ENCODE measurements at regions of chr3 and their contacts with region 1.

Region 1: GRCh38 chr3:107522510-107523288 is at the start of gene BBX:
- DNase-seq: peak; percentile 85 to 97 (median 92)
- ATAC-seq: peak; percentile 89
- H3K4me3 ChIP-seq: peak within 1 kb of the TSS; percentile 67
- H3K4me3 Mint-ChIP-seq: peak within 1 kb of the TSS; percentile 99
- H3K27ac ChIP-seq: peak within 1 kb of the TSS; percentile 77 to 85
- H3K27ac Mint-ChIP-seq: peak within 1 kb of the TSS; percentile 95
- H3K4me1 ChIP-seq: peaks cover 19% of the 10 kb centered on the region
- H3K4me1 Mint-ChIP-seq: peaks cover 26% of the 10 kb centered on the region
- H3K27me3 ChIP-seq: no peaks in the 10 kb centered on the region
- H3K27me3 Mint-ChIP-seq: no peaks in the 10 kb centered on the region
- CTCF ChIP-seq: no peak
- total RNA-seq, gene BBX: 79.7 to 81.8 TPM

Region 2: DNA sequence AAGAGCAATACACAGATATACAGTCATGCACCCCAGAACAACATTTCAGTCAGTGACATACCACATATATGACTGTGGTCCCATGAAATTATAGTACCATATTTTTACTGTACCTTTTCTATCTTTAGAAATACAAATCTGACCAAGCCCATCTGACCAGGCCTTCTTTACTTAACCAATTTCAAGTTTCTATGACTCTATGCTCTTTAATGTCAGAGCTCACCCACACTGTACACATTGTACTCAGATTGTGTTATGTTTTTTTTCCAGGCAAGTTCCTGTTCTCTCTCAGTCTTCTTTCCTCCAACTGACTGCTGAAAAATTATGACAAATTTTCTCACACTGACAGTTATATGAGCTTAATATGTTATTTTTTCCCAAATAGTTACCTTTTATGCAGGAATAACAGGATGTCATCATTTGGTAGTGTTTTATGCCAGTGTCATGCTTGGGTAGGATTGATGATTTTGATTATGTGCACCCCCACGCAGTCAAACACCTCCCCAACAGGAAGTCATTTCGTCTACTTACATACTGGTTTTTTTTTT is 1645.8 kb before region 1 on chr3:
- CTCF ChIA-PET with region 1: no interaction called
- POLR2A ChIA-PET with region 1: no interaction called
- intact Hi-C with region 1: loop called in 1 of 2 experiments (anchors 10 kb)
- DNase-seq: peak in 4 of 14 experiments; percentile 22 to 52 (median 44)
- ATAC-seq: peak; percentile 82
- H3K4me3 ChIP-seq: peak overlapping the region; percentile 3
- H3K4me3 Mint-ChIP-seq: peak overlapping the region; percentile 56
- H3K27ac ChIP-seq: peak overlapping the region in 1 of 2 donors; percentile 6
- H3K27ac Mint-ChIP-seq: peak overlapping the region; percentile 71
- H3K4me1 ChIP-seq: no peaks in the 10 kb centered on the region
- H3K4me1 Mint-ChIP-seq: peaks cover 35% of the 10 kb centered on the region
- H3K27me3 ChIP-seq: no peaks in the 10 kb centered on the region
- H3K27me3 Mint-ChIP-seq: no peaks in the 10 kb centered on the region
- CTCF ChIP-seq: no peak

Region 3: GRCh38 chr3:107429320-107430181 is 93.1 kb before region 1 on chr3:
- CTCF ChIA-PET with region 1: interaction called, 3 read pairs
- POLR2A ChIA-PET with region 1: interaction called, 11 read pairs
- intact Hi-C with region 1: loop called (anchors 2 kb)
- DNase-seq: peak; percentile 18 to 81 (median 44)
- ATAC-seq: peak; percentile 66
- H3K4me3 ChIP-seq: peak overlapping the region; percentile 68
- H3K4me3 Mint-ChIP-seq: peak overlapping the region; percentile 93
- H3K27ac ChIP-seq: no peak overlapping the region
- H3K27ac Mint-ChIP-seq: peak overlapping the region; percentile 50
- H3K4me1 ChIP-seq: peaks cover 24% of the 10 kb centered on the region
- H3K4me1 Mint-ChIP-seq: peaks cover 18% of the 10 kb centered on the region
- H3K27me3 ChIP-seq: no peaks in the 10 kb centered on the region
- H3K27me3 Mint-ChIP-seq: no peaks in the 10 kb centered on the region
- CTCF ChIP-seq: peak; percentile 90

Region 4: DNA sequence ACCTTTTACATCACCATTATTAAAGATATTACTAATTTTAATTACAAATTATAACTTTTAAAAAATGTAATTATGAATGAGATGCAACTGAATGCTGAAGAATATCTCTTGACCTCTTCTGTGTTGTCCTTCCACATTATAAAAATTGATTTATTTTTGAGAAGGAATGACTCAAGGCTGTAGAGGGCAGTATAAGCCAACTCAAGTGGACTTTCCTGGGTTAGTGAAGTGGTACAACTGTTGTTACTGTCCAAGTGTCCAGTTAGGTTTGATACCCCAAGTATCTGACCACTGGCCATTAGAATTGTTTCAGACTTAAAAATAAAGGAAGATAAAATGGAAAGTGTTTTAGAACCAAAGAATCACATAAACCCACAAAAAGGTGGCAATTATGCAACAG is 52.0 kb after region 1 on chr3:
- CTCF ChIA-PET with region 1: no interaction called
- POLR2A ChIA-PET with region 1: no interaction called
- intact Hi-C with region 1: no loop called
- DNase-seq: peak in 3 of 14 experiments; percentile 33 to 45 (median 41)
- ATAC-seq: peak; percentile 46
- H3K4me3 ChIP-seq: no peak overlapping the region
- H3K4me3 Mint-ChIP-seq: no peak overlapping the region
- H3K27ac ChIP-seq: no peak overlapping the region
- H3K27ac Mint-ChIP-seq: no peak overlapping the region
- H3K4me1 ChIP-seq: peaks cover 3% of the 10 kb centered on the region
- H3K4me1 Mint-ChIP-seq: peaks cover 46% of the 10 kb centered on the region
- H3K27me3 ChIP-seq: no peaks in the 10 kb centered on the region
- H3K27me3 Mint-ChIP-seq: no peaks in the 10 kb centered on the region
- CTCF ChIP-seq: peak; percentile 60

Region 5: DNA sequence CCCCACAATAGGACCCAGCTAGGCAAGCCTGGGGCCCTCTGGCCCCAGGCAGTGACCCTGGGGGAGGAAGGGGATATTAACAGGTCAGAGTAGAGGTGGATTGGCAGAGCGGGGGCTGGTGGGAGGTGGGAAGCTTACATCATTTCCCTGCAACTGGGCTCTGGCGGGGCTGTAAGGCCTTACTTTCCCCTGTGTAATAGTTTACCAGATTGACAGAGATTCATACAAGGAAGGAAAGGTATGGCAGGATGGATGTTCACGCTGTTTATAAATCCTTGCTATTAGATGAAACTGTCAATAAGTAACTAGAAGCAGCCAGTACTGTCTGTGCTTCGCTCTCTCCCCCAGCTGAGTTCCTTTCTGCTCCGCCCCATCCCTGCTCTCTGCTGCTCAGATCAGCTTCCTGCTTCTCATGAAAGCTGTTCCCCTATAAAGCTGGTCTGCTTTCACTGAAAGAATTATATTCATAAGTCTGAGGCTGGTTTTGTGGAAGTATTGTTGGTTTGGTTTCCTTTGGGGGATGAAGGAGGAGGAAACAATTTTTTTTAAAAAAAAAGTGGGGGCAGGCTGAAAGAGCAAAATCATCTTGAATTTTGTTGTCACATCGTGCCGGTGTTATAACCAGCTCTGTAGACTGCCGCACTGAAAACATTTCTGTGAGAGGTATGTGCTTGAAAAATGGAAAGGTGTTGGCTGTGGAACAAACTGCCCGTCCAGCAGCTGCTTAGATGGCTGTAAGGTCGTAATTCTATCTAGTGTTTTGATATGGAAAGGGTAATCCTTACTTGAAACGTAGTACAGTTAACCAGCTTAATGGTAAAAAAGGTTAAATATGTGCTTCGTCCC is 76.5 kb after region 1 on chr3:
- CTCF ChIA-PET with region 1: no interaction called
- POLR2A ChIA-PET with region 1: interaction called, 11 read pairs
- intact Hi-C with region 1: loop called in 1 of 2 experiments (anchors 5 kb)
- DNase-seq: peak in 13 of 14 experiments; percentile 21 to 69 (median 31)
- ATAC-seq: peak; percentile 90
- H3K4me3 ChIP-seq: peak overlapping the region; percentile 49
- H3K4me3 Mint-ChIP-seq: peak overlapping the region; percentile 86
- H3K27ac ChIP-seq: peak overlapping the region; percentile 52 to 82
- H3K27ac Mint-ChIP-seq: peak overlapping the region; percentile 84
- H3K4me1 ChIP-seq: peaks cover 11% of the 10 kb centered on the region
- H3K4me1 Mint-ChIP-seq: peaks cover 76% of the 10 kb centered on the region
- H3K27me3 ChIP-seq: no peaks in the 10 kb centered on the region
- H3K27me3 Mint-ChIP-seq: no peaks in the 10 kb centered on the region
- CTCF ChIP-seq: no peak

Region 6: DNA sequence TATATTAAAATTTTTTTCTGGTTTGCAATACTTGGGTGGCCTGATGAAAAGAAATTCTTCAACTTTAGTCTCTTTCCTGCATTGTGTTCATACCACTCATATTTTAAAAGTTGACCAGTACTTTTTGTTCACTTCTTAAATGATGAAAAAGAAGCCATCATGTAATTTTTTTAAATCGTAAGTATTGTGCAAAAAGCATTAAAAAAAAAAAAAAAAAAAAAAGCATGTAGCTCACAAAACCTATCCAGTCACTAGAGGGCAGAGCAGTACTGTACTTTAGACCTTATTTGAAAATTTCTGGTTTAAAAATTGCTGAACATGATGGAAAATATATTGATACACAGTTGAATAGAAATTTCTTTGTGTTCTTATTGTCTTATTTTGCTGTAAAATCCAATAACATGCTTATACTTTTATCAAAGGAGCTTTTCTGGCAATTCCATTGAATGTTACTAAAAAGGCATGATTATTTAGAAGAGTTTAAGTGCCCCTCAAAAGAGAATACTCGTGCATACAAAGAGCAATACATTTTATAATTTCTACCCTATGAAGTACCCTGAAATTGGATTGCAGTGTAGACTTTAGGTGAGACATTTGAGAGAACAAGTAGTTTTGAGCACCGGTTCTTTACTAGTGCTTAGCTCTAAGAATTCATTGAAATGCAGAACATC is 137.7 kb after region 1 on chr3:
- CTCF ChIA-PET with region 1: no interaction called
- POLR2A ChIA-PET with region 1: no interaction called
- intact Hi-C with region 1: no loop called
- DNase-seq: peak in 3 of 14 experiments; percentile 48 to 70 (median 60)
- ATAC-seq: no peak
- H3K4me3 ChIP-seq: no peak overlapping the region
- H3K4me3 Mint-ChIP-seq: no peak overlapping the region
- H3K27ac ChIP-seq: no peak overlapping the region
- H3K27ac Mint-ChIP-seq: no peak overlapping the region
- H3K4me1 ChIP-seq: peaks cover 7% of the 10 kb centered on the region
- H3K4me1 Mint-ChIP-seq: peaks cover 45% of the 10 kb centered on the region
- H3K27me3 ChIP-seq: no peaks in the 10 kb centered on the region
- H3K27me3 Mint-ChIP-seq: no peaks in the 10 kb centered on the region
- CTCF ChIP-seq: peak; percentile 86

Region 7: DNA sequence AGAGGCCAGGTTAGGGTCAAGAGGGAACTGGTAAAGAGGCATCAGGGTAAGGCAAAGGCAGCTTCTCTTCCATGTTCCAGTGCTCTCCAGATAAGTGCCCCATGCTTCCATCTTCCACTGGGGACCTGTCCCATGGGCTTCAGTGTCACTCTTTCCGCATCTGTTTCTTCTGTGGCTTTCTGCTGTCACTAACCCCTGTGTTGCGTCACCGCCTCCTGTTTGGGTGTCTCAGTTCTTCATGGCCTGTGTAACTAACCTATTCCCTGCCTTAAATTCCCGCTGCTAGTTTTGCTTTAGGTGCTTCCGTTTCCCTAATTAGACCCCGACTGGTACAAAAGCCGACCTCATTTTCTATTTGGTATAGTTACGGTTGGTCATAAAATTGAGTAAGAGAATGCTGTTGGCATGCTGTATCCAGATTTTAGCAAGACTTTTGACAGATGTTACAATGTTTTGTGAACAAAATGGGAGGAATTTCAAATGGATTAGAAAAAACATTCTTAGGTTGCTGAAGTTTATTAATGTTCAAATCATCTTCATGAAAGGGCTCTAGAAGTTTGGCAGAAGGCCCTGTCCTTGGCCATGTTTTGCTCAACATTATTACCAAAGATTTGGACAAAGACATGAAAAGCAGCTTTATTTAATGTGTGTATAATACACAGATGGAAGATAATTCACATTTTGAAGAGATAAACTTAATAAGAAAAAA is 245.4 kb after region 1 on chr3:
- CTCF ChIA-PET with region 1: no interaction called
- POLR2A ChIA-PET with region 1: no interaction called
- intact Hi-C with region 1: no loop called
- DNase-seq: no peak
- ATAC-seq: no peak
- H3K4me3 ChIP-seq: no peak overlapping the region
- H3K4me3 Mint-ChIP-seq: no peak overlapping the region
- H3K27ac ChIP-seq: no peak overlapping the region
- H3K27ac Mint-ChIP-seq: no peak overlapping the region
- H3K4me1 ChIP-seq: no peaks in the 10 kb centered on the region
- H3K4me1 Mint-ChIP-seq: no peaks in the 10 kb centered on the region
- H3K27me3 ChIP-seq: no peaks in the 10 kb centered on the region
- H3K27me3 Mint-ChIP-seq: no peaks in the 10 kb centered on the region
- CTCF ChIP-seq: no peak

Measured in CD4-positive, alpha-beta T cell (primary cell).